Heart left ventricle (tissue), 16 donors: ENCODE measurements at regions of chr10 and their contacts with region 1.

Region 1: DNA sequence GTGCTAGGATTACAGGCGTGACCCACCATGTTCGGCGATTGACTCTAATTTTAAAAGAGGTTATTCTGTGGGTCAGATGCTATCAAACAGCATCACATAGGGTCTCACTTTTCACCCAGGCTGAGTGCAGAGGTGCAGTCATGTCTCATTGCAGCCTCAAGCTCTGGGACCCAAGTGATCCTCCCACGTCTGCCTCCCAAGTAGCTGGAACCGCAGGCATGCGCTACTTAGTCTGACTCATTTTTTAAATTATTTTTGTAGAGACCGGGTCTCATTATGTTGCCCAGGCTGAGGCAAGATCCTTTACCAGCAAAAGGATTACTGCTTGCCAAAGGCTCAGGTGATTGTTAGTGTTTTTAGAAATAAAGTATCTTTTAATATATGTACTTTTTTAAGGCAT is 42.9 kb upstream of the STOX1 start:
- DNase-seq: no peak
- ATAC-seq: no peak
- H3K4me3 ChIP-seq: no peak overlapping the region
- H3K27ac ChIP-seq: no peak overlapping the region
- H3K4me1 ChIP-seq: no peaks in the 10 kb centered on the region
- H3K27me3 ChIP-seq: no peaks in the 10 kb centered on the region
- CTCF ChIP-seq: no peak
- POLR2A ChIP-seq: no peak

Region 2: DNA sequence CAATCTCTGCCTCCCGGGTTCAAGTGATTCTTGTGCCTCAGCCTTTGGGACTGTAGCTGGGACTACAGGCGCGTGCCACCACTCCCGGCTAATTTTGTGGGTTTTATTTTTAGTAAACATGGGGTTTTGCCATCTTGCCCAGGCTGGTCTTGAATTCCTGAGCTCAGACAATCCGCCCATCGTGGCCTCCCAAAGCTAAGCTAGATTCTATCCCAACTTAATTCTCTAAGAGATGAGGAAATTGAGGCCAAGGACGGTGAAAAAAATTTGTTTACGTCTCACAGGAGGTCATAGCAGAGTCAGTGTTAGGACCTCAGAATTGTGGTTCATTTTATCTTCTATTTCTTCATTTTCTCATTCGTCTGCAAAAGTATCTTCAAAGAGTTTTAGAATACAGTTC is 57.3 kb before region 1 on chr10:
- intact Hi-C with region 1: loop called in 1 of 10 experiments (anchors 5 kb)
- DNase-seq: no peak
- ATAC-seq: no peak
- H3K4me3 ChIP-seq: no peak overlapping the region
- H3K27ac ChIP-seq: no peak overlapping the region
- H3K4me1 ChIP-seq: peaks cover 0 to 12% (median 7%) of the 10 kb centered on the region in 12 donors
- H3K27me3 ChIP-seq: no peaks in the 10 kb centered on the region
- CTCF ChIP-seq: no peak
- POLR2A ChIP-seq: no peak

Region 3: GRCh38 chr10:68742397-68742796 is 42.1 kb before region 1 on chr10:
- intact Hi-C with region 1: loop called in 1 of 10 experiments (anchors 5 kb)
- DNase-seq: no peak
- ATAC-seq: no peak
- H3K4me3 ChIP-seq: no peak overlapping the region
- H3K27ac ChIP-seq: no peak overlapping the region
- H3K4me1 ChIP-seq: no peaks in the 10 kb centered on the region
- H3K27me3 ChIP-seq: no peaks in the 10 kb centered on the region
- CTCF ChIP-seq: no peak
- POLR2A ChIP-seq: no peak